Spleen (tissue), 13 donors: ENCODE measurements at regions of chr20 and their contacts with region 1.

Region 1: GRCh38 chr20:31712564-31713311 is 9.9 kb downstream of the BCL2L1 start:
- DNase-seq: peak; percentile 6
- H3K4me3 ChIP-seq: peak overlapping the region in 1 of 8 donors; percentile 24
- H3K27ac ChIP-seq: peak overlapping the region; percentile 50 to 97 (median 89)
- H3K4me1 ChIP-seq: peaks cover 50 to 100% (median 91%) of the 10 kb centered on the region in 6 donors
- H3K27me3 ChIP-seq: no peaks in the 10 kb centered on the region
- CTCF ChIP-seq: no peak
- POLR2A ChIP-seq: no peak

Region 2: GRCh38 chr20:31674895-31675827 is 37.6 kb before region 1 on chr20:
- intact Hi-C with region 1: loop called (anchors 5 kb)
- DNase-seq: peak; percentile 91
- H3K4me3 ChIP-seq: peak overlapping the region; percentile 1 to 71 (median 42)
- H3K27ac ChIP-seq: peak overlapping the region; percentile 70 to 95 (median 84)
- H3K4me1 ChIP-seq: peaks cover 59 to 100% (median 91%) of the 10 kb centered on the region in 6 donors
- H3K27me3 ChIP-seq: no peaks in the 10 kb centered on the region
- CTCF ChIP-seq: no peak
- POLR2A ChIP-seq: no peak